ENCODE measurements at regions of chr14 and their contacts with region 1.

Region 1: GRCh38 chr14:38366374-38366773 is 110.5 kb upstream of the CLEC14A start:
- DNase-seq: no peak
- ATAC-seq: no peak

Region 2: DNA sequence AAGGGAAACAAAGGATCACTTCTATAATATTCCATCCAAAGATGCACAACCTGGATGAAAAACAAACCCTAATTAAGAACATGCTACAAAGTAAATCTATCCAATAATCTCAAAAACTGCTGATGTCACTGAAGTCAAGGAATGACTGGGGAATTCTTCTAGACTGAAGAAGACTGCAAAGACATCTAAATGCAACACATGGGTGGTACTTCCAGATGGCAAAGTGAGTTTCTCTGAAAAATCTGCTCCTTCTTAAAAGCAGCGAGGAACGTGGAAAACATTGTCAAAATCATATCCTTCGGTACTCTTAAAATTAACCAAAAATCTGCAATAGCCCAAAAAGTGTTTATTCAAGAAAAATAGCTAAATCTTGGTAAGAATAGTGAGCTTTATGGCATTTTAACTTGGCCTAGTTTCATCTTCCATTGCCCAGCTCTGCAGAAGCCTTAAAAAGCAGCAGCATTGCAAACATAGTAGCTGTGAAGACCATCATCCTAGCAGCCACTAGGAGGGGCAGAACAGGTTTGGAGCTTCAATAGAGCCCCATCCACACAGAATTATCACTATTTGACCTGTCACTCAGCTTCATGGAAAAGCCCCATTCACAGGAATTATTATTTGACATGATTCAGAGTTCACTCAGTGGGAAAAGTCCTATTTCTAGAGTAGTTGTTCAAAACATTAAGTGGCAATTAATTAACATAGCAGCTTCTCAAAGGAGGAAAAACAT is 117.9 kb before region 1 on chr14:
- intact Hi-C with region 1: loop called in 1 of 2 experiments (anchors 5 kb)
- DNase-seq: no peak
- ATAC-seq: no peak

Region 3: DNA sequence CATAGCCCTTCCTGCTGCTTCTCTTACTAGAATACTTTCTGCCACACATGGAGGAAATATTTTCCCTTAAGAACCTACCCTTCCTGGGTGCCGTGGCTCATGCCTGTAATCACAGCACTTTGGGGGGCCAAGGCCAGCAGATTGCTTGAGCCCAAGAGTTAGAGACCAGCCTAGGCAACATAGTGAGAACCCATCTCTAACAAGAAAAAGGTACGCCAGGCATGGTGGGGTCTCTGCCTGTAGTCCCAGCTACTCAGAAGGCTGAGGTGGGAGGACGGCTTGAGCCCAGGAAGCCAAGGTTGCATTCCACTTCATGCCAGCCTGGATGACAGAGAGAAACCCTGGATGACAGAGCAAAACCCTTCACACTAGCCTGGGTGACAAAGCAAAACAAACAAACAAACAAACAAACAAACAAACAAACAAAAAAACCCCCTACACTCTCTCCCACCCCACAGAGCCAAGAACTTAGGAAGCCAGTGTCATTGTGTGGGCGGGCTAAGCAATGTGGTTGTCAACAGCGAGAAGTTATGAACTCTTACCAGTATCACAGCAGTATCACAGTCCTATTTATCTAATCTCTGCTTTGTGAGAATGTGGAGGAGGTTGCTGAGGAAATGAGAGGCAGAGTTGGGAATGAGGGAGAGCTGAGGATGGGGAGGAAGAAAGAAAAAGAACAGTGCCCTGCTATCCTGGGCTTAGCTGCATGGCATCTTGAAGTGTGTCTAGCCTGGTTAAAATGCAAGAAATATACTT is 56.7 kb before region 1 on chr14:
- intact Hi-C with region 1: no loop called
- DNase-seq: no peak
- ATAC-seq: peak in 1 of 2 donors; percentile 27